ENCODE measurements at regions of chr16 and their contacts with region 1.

Region 1: DNA sequence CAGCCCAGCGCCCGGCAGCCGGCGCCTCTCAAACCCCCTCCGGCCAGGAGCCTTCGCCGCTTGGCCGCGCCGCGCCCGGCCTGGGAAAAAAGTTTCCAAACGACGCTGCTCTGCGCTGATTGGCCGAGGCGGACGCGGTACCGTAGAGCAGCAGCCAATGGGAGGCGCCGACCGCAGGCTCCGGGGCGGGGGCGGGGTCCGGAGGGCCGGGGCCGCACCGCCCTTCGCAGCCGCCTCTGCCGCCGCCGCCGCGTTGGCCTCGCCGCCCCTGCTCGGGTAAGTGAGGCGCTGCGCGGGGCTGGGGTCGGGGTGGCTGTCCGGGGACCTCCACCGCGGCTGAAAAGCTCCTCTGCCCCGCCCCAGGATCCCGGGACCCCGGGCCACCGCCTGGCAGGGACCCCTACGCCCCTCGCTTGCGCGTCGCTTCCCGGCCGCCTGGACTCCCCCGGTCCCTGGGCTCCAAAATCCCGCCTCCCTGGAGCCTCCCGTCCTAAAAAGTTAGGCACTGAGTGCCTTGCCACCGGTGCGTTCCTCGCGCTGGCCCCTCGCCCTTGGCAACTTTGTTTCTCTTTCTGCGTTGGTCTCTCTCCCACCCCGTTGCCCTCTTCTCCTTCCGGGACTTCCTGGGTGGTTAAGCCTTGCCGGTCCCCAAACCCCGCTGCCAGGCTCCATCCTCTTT is at the start of gene NDE1:
- DNase-seq: peak; percentile 90
- H3K4me3 ChIP-seq: peak within 1 kb of the TSS; percentile 69 to 86 (median 82)
- H3K27ac ChIP-seq: peak within 1 kb of the TSS; percentile 74
- H3K4me1 ChIP-seq: peaks cover 30% of the 10 kb centered on the region
- H3K27me3 ChIP-seq: no peaks in the 10 kb centered on the region
- CTCF ChIP-seq: no peak
- total RNA-seq, gene NDE1: 53.3 to 120 TPM

Region 2: DNA sequence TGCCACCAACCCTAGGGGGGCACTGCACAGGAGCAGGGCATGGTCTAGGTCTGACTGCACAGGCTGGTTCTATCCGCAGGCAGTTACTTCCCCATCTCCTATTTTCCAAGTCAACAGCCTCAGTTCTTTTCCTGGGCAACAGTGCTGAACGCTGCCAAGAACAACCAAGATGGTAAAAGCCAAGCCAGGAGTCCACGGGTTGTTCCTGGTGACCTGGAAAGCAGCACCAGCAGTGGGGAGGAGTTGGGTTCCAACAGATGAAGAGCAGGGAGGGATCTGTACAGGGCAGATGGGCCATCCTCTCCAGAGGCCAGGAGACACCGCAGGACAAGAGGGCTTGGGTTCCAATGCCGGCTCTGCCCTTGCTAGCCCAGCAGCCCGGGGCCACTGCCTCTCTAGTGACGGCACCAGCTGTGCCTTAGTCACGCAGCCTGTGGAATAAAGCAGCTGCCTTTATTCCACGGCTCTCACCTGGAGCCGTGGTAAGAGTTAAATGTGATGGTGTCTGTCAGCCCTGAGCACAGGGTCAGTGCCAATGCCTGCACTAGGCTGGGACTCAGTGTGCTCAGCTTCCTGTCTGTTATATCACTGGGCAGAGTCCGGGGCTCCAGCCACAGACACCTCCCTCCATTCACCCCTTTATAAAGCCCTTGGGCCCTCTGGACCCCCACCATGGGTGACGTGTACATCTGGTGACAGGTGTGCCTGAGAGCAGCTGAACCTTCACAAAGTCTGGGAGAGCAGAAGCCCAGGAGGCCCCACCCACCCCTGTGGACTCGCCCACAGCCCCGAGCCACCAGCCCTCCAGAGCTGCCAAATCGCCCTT is 52.1 kb before region 1 on chr16:
- CTCF ChIA-PET with region 1: no interaction called
- dilution Hi-C with region 1: no loop called
- in situ Hi-C with region 1: no loop called
- intact Hi-C with region 1: no loop called
- DNase-seq: no peak
- H3K4me3 ChIP-seq: no peak overlapping the region
- H3K27ac ChIP-seq: no peak overlapping the region
- H3K4me1 ChIP-seq: no peaks in the 10 kb centered on the region
- H3K27me3 ChIP-seq: no peaks in the 10 kb centered on the region
- CTCF ChIP-seq: no peak

Region 3: GRCh38 chr16:15672514-15673167 is 22.5 kb after region 1 on chr16:
- CTCF ChIA-PET with region 1: no interaction called
- dilution Hi-C with region 1: no loop called
- in situ Hi-C with region 1: no loop called
- intact Hi-C with region 1: loop called (anchors 1 kb)
- DNase-seq: peak; percentile 99
- H3K4me3 ChIP-seq: no peak overlapping the region
- H3K27ac ChIP-seq: peak overlapping the region; percentile 98
- H3K4me1 ChIP-seq: peaks cover 44% of the 10 kb centered on the region
- H3K27me3 ChIP-seq: no peaks in the 10 kb centered on the region
- CTCF ChIP-seq: no peak

Region 4: DNA sequence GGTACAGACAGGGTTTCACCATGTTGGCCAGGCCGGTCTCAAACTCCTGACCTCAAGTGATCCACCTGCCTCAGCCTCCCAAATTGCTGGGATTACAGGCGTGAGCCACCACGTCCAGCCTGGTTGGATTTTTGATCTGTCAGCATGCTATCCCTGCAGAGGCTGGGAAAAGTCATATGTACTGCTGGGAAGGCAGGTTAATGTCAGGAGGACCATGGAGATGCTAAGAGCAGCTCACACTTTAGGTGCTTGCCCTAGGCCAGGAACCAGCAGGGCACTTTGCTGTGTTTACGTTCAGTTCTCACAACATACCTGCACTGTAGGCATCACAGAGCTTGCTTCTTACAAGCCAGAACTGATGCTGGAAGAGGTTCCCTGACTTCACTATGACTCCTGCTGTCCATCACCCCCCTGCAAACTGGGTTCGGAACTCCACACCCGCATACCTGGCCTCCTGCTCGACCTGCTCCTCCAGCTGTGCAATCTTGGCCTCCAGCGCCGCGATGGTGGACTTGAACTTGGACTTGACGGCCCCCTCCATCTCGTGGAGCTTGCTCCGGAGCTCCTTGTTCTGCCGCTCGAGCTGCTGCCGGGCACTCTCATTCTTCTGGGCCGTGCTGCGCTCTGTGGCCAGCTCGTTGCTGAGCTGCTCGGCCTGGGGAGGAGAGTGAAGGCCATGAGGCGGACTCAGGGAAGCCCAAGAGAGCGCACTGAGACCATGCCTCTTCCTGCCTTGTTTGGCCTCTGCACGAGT is 66.7 kb after region 1 on chr16:
- CTCF ChIA-PET with region 1: no interaction called
- dilution Hi-C with region 1: no loop called
- in situ Hi-C with region 1: no loop called
- intact Hi-C with region 1: no loop called
- DNase-seq: no peak
- H3K4me3 ChIP-seq: no peak overlapping the region
- H3K27ac ChIP-seq: no peak overlapping the region
- H3K4me1 ChIP-seq: no peaks in the 10 kb centered on the region
- H3K27me3 ChIP-seq: no peaks in the 10 kb centered on the region
- CTCF ChIP-seq: no peak